ENCODE measurements at regions of chr19 and their contacts with region 1.

Region 1: DNA sequence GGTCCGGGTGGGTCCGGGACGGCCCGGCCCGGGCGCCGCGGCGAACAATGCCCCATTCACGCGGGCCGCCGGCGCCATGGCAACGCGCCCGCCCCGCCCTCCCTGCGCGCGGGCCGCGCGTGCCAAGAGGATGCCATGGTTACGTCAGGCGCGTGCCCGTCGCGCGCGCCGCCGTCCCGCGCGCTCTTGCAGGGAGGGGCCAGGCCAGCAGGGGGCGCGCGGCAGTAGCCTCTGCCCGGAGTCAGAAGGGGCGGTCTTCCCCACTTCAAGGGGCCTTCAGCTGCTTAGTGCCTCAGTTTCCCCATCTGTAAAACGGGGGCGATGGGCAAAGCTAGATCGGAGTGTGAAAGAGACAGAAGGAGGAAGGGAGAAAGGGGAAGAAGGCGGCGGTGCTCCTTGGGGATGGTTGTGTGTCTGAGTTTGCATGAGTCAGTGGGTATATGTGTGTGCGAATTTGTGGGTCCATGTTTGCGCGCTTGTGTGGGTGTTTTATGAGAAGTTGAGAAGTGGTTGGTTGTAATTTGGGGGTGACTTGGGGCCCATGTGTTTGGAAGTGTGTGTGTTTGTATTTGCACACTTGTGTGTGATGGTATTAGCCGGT is 11.6 kb upstream of the NFIX start:
- DNase-seq: peak; percentile 86 to 91
- H3K4me3 ChIP-seq: peak overlapping the region; percentile 29 to 35 (median 30)
- H3K27ac ChIP-seq: peak overlapping the region in 1 of 5 donors; percentile 71
- H3K4me1 ChIP-seq: peaks cover 7 to 35% (median 28%) of the 10 kb centered on the region in 4 donors
- H3K27me3 ChIP-seq: no peaks in the 10 kb centered on the region
- CTCF ChIP-seq: peak in 5 of 7 experiments; percentile 92 to 98 (median 93)
- EP300 ChIP-seq: no peak
- POLR2A ChIP-seq: no peak

Region 2: DNA sequence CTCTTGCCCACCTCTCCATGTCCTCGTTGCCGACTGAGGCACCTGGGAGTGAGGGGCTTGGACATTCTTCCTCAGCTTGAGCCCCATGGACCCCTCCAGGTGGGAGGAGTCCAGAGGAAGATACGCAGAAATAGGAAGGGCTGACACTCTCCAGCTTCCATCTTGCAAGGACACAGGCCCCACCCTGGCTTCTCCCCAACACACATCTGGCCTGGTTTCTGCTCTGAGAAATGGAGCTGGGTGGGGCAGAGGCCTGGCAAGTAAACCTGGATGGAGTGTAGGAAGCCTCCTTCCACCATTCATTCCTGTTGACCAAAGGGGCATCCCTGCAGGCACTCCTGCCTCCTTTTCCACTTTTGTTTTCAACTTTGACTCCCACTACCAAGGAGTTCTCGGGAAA is 62.2 kb after region 1 on chr19:
- intact Hi-C with region 1: loop called (anchors 5 kb)
- DNase-seq: no peak
- H3K4me3 ChIP-seq: no peak overlapping the region
- H3K27ac ChIP-seq: peak overlapping the region in 1 of 5 donors; percentile 62
- H3K4me1 ChIP-seq: peaks cover 33 to 88% (median 61%) of the 10 kb centered on the region in 4 donors
- H3K27me3 ChIP-seq: no peaks in the 10 kb centered on the region
- CTCF ChIP-seq: no peak
- EP300 ChIP-seq: no peak
- POLR2A ChIP-seq: no peak

Region 3: DNA sequence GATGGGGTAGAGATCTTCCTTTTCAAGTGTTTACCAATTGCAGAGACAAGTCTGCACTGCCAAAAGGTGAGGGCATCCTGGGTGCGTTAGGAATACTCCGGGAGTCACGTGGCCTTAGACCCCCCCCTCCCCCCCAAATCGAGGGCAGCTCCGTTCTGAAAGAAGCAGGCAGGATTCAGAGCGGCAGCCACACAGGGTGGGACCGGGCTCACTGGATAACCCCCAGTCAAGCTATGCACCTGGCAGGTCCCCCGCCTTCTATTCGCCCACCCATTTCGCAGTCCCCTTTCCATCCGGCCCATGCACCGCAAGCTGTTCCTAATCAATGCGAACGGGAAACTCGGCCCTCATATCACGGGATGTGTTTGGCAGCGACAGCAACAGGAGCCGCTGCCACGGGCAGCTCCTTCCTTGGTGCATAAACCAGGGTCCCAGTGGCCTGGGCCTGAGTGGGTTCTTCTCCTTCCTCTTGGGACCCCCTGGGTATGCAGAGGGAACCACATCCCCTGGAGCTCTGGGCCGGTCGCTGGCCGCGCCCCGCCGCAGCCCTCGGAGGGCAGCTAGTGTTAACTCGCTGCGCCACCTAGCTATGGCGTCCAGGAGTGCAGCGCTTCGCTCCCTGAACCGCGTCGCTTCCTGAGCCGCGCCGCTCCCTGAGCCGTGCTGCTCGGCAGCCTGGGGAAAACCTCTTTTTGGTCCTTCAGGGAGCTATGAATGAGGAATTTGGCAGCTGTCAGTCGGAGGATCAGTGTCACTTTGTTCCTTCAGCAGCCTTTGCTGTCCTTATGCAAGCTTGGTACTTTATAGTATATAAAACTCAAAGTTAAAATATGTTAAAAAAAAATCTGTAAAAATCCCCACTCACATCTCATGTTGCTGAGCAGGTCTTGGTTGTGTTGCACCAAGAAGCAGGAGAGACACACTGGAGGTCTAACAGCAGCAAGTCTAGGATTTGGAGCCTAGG is 77.6 kb after region 1 on chr19:
- intact Hi-C with region 1: loop called (anchors 5 kb)
- DNase-seq: peak; percentile 87 to 95
- H3K4me3 ChIP-seq: peak overlapping the region; percentile 37 to 47 (median 44)
- H3K27ac ChIP-seq: peak overlapping the region; percentile 32 to 95 (median 67)
- H3K4me1 ChIP-seq: peaks cover 69 to 100% (median 85%) of the 10 kb centered on the region in 4 donors
- H3K27me3 ChIP-seq: no peaks in the 10 kb centered on the region
- CTCF ChIP-seq: peak in 5 of 7 experiments; percentile 91 to 96 (median 94)
- EP300 ChIP-seq: no peak
- POLR2A ChIP-seq: no peak